ENCODE measurements at regions of chr22 and their contacts with region 1.

Region 1: DNA sequence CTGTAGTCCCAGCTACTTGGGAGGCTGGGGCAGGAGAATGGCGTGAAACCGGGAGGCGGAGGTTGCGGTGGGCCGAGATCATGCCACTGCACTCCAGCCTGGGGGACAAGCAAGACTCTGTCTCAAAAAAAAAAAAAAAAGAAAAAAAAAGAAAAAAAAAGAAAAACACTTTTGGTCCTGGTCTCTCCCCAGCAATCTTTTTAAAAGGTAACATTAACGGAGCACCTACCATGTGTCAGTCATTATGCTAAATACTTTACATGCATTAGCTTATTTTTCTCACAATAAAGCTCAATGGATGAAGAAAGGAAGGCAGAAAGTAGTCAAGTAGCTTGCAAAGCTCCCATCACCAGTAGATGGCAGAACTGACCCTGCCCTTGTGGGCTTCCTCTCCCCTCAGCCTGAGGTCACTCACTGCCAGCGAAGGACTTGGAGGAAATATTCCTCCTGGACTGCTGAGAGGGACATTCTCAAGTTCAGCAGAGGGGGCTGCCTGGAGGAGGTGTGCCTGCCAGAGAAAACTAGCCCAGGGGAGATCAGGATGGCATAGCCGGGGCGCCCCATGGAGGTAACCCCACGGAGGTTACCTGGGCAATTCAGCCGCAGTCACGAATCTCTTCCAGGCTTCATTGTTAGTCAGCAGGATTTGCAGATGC is 15.5 kb downstream of the APOL3 start:
- DNase-seq: peak; percentile 55
- ATAC-seq: peak; percentile 74
- H3K4me3 ChIP-seq: no peak overlapping the region
- H3K4me3 Mint-ChIP-seq: no peak overlapping the region
- H3K27ac ChIP-seq: no peak overlapping the region
- H3K27ac Mint-ChIP-seq: no peak overlapping the region
- H3K4me1 ChIP-seq: no peaks in the 10 kb centered on the region
- H3K4me1 Mint-ChIP-seq: peaks cover 1% of the 10 kb centered on the region
- H3K27me3 ChIP-seq: no peaks in the 10 kb centered on the region
- H3K27me3 Mint-ChIP-seq: no peaks in the 10 kb centered on the region
- CTCF ChIP-seq: peak; percentile 69

Region 2: GRCh38 chr22:36221799-36222751 is 77.1 kb after region 1 on chr22:
- CTCF ChIA-PET with region 1: interaction called, 3 read pairs
- POLR2A ChIA-PET with region 1: no interaction called
- intact Hi-C with region 1: loop called (anchors 5 kb)
- DNase-seq: peak; percentile 60
- ATAC-seq: peak; percentile 70
- H3K4me3 ChIP-seq: no peak overlapping the region
- H3K4me3 Mint-ChIP-seq: peak overlapping the region; percentile 46
- H3K27ac ChIP-seq: no peak overlapping the region
- H3K27ac Mint-ChIP-seq: no peak overlapping the region
- H3K4me1 ChIP-seq: no peaks in the 10 kb centered on the region
- H3K4me1 Mint-ChIP-seq: peaks cover 5% of the 10 kb centered on the region
- H3K27me3 ChIP-seq: peaks cover 0 to 4% (median 0%) of the 10 kb centered on the region in 4 experiments
- H3K27me3 Mint-ChIP-seq: peaks cover 19% of the 10 kb centered on the region
- CTCF ChIP-seq: peak; percentile 65

Measured in B cell (primary cell).